PC-3 (cell line): ENCODE measurements at regions of chr15 and their contacts with region 1.

Region 1: GRCh38 chr15:30903497-30904201 is at the start of gene FAN1:
- DNase-seq: peak; percentile 93
- ATAC-seq: peak; percentile 97
- H3K4me3 ChIP-seq: peak within 1 kb of the TSS; percentile 92
- H3K27ac ChIP-seq: peak within 1 kb of the TSS; percentile 41
- H3K4me1 ChIP-seq: peaks cover 10% of the 10 kb centered on the region; the same call in 1 of the 2 replicates
- H3K27me3 ChIP-seq: no peaks in the 10 kb centered on the region
- CTCF ChIP-seq: no peak
- total RNA-seq, gene FAN1: 16.2 and 16.4 TPM in 2 replicates

Region 2: DNA sequence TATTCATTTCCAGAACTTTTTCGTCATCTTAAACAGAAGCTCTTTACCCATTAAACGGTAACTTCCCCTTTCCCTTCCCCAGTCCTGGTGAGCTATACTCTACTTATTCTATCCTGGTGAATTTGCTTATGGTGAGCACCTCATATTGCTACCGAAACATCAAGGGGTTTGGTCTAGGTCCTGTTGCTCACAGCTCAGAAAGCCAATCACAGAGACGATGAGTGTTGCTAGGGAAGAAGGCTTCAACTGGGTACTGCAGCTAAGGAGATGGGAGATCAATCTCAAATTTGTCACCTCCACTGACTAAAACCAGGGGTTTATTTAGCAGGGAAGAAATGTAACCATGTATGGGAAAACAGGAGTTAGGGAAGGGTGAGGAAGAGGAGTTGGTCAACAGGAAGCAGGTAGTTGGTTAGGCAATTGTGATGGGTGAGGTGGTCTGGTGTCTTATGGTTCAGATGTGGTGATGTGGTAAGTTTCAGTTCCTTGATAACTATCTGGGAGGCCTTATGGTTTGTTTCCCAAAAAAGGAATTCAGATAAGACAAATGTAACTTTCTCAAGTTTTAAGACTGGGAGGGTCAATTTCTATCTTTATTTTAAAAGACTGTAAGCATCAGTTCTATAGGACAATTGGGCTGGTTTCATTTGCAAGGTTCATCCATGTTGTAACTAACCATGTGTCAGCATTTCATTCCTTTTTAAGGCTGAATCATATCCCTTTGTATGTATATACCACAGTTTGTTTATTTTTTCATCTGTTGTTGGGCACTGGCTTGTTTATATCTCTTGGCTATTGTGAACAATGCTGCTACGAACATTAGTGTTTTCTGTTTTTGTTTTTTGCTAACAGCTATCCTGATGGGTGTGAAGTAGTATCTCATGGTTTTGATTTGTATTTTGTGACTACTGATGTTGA is 253.4 kb before region 1 on chr15:
- CTCF ChIA-PET with region 1: no interaction called
- POLR2A ChIA-PET with region 1: no interaction called
- intact Hi-C with region 1: loop called (anchors 10 kb)
- DNase-seq: no peak
- ATAC-seq: no peak
- H3K4me3 ChIP-seq: no peak overlapping the region
- H3K27ac ChIP-seq: no peak overlapping the region
- H3K4me1 ChIP-seq: no peaks in the 10 kb centered on the region
- H3K27me3 ChIP-seq: no peaks in the 10 kb centered on the region
- CTCF ChIP-seq: no peak

Region 3: DNA sequence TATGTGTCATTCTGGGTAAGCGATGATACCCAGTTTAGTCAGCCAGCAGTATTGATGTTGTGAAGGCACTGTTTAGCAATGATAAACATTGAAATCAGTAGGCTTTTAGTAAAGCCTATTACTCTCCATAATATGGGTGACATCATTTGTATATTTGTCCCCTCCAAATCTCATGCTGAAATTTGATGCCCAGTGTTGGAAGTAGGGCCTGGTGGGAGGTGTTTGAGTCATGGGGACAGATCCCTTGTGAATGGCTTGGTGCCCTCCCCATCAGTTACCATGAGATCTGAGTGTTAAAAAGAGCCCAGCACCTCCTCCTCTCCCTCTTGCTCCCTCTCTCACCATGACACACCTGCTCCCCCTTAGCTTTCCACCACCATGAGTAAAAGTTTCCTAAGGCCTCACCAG is 31.3 kb before region 1 on chr15:
- CTCF ChIA-PET with region 1: no interaction called
- POLR2A ChIA-PET with region 1: no interaction called
- intact Hi-C with region 1: loop called (anchors 1 kb)
- DNase-seq: peak; percentile 77
- ATAC-seq: peak; percentile 89
- H3K4me3 ChIP-seq: no peak overlapping the region
- H3K27ac ChIP-seq: peak overlapping the region; percentile 10
- H3K4me1 ChIP-seq: peaks cover 24% of the 10 kb centered on the region
- H3K27me3 ChIP-seq: no peaks in the 10 kb centered on the region
- CTCF ChIP-seq: no peak